ENCODE measurements at regions of chr10 and their contacts with region 1.

Region 1: GRCh38 chr10:95290461-95291364 is at the start of gene PDLIM1:
- DNase-seq: no peak
- ATAC-seq: peak; percentile 55
- H3K4me3 ChIP-seq: peak within 1 kb of the TSS; percentile 97
- H3K27ac ChIP-seq: peak within 1 kb of the TSS; percentile 98
- H3K4me1 ChIP-seq: peaks cover 47% of the 10 kb centered on the region
- H3K27me3 ChIP-seq: no peaks in the 10 kb centered on the region
- CTCF ChIP-seq: peak; percentile 21 to 30 (median 27); a peak in 5 of 6 replicates
- EP300 ChIP-seq: no peak
- POLR2A ChIP-seq: peak; percentile 96
- RAD21 ChIP-seq: no peak
- polyA plus RNA-seq, gene PDLIM1: 133 to 338 TPM

Region 2: GRCh38 chr10:95236068-95236903 is 54.4 kb before region 1 on chr10:
- CTCF ChIA-PET with region 1: interaction called, 4 read pairs
- POLR2A ChIA-PET with region 1: interaction called, 4 read pairs
- RAD21 ChIA-PET with region 1: interaction called, 5 read pairs
- SMC1A ChIA-PET with region 1: interaction called, 18 read pairs
- in situ Hi-C with region 1: no loop called
- intact Hi-C with region 1: no loop called
- DNase-seq: peak; percentile 90
- ATAC-seq: peak; percentile 96
- H3K4me3 ChIP-seq: no peak overlapping the region; the same call in 1 of the 2 replicates
- H3K27ac ChIP-seq: peak overlapping the region; percentile 78
- H3K4me1 ChIP-seq: peaks cover 21% of the 10 kb centered on the region
- H3K27me3 ChIP-seq: no peaks in the 10 kb centered on the region
- CTCF ChIP-seq: no peak
- EP300 ChIP-seq: peak; percentile 93
- POLR2A ChIP-seq: peak; percentile 39; the same call in 1 of the 2 replicates
- RAD21 ChIP-seq: no peak

Region 3: GRCh38 chr10:95266674-95267095 is 24.0 kb before region 1 on chr10:
- CTCF ChIA-PET with region 1: interaction called, 9 read pairs
- POLR2A ChIA-PET with region 1: interaction called, 7 read pairs
- RAD21 ChIA-PET with region 1: interaction called, 3 read pairs
- SMC1A ChIA-PET with region 1: interaction called, 13 read pairs
- in situ Hi-C with region 1: no loop called
- intact Hi-C with region 1: no loop called
- DNase-seq: no peak
- ATAC-seq: peak; percentile 93
- H3K4me3 ChIP-seq: no peak overlapping the region
- H3K27ac ChIP-seq: no peak overlapping the region
- H3K4me1 ChIP-seq: peaks cover 4% of the 10 kb centered on the region; the same call in 1 of the 2 replicates
- H3K27me3 ChIP-seq: no peaks in the 10 kb centered on the region
- CTCF ChIP-seq: no peak
- EP300 ChIP-seq: peak in 1 of 2 experiments; percentile 45; a peak in 1 of 4 replicates
- POLR2A ChIP-seq: no peak
- RAD21 ChIP-seq: no peak

Region 4: GRCh38 chr10:95308389-95309302 is 17.9 kb after region 1 on chr10:
- CTCF ChIA-PET with region 1: interaction called, 5 read pairs
- POLR2A ChIA-PET with region 1: interaction called, 17 read pairs
- RAD21 ChIA-PET with region 1: interaction called, 13 read pairs
- SMC1A ChIA-PET with region 1: interaction called, 40 read pairs
- in situ Hi-C with region 1: no loop called
- intact Hi-C with region 1: no loop called
- DNase-seq: no peak
- ATAC-seq: peak; percentile 66
- H3K4me3 ChIP-seq: no peak overlapping the region
- H3K27ac ChIP-seq: peak overlapping the region; percentile 57; the same call in 1 of the 2 replicates
- H3K4me1 ChIP-seq: peaks cover 25% of the 10 kb centered on the region
- H3K27me3 ChIP-seq: no peaks in the 10 kb centered on the region
- CTCF ChIP-seq: no peak
- EP300 ChIP-seq: no peak
- POLR2A ChIP-seq: no peak
- RAD21 ChIP-seq: no peak

Region 5: GRCh38 chr10:95394161-95394880 is 103.6 kb after region 1 on chr10:
- CTCF ChIA-PET with region 1: no interaction called
- POLR2A ChIA-PET with region 1: no interaction called
- RAD21 ChIA-PET with region 1: no interaction called
- SMC1A ChIA-PET with region 1: no interaction called
- in situ Hi-C with region 1: no loop called
- intact Hi-C with region 1: no loop called
- DNase-seq: peak; percentile 55
- ATAC-seq: peak; percentile 74
- H3K4me3 ChIP-seq: no peak overlapping the region
- H3K27ac ChIP-seq: peak overlapping the region; percentile 72
- H3K4me1 ChIP-seq: peaks cover 50% of the 10 kb centered on the region
- H3K27me3 ChIP-seq: no peaks in the 10 kb centered on the region
- CTCF ChIP-seq: no peak
- EP300 ChIP-seq: peak; percentile 29 to 77; a peak in 1 of 4 replicates
- POLR2A ChIP-seq: no peak
- RAD21 ChIP-seq: no peak

Region 6: DNA sequence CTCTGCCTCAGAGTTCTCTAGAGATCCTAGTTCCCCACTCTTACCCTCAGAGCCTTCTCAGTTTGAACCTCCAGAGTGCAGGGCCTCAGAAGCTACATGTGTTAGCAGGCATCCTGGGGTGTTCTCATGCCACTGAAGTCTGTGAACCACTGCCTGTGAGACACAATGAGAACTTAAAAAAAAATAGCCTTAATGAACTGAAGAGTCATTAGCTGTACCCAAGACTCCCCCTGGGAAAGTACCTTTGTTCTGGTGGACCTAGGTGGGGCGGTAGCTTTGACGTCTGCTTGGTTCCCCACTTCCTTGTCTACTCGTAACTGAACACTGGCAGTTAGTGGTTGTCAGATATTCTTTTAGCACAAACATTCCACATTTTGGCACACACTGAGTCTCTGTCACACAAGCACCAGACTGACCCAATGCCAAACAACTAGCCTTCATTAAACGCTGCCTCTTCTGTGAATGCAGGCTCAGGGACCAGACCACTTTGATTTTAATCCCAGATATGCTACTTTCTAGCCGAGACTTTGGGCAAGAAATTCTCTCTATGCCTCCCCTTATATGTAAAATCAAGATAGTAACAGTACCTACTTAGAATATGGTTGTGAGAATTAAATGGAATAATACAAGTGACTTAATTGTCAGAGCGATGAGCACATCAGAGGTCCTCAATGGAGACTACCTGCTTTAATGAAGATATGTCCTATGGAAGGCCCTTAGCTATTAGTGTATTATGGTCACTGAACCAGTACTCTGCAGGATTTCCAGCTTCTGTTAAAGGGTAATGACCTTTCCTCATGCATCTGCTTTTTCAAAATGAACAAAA is 541.7 kb after region 1 on chr10:
- CTCF ChIA-PET with region 1: no interaction called
- POLR2A ChIA-PET with region 1: no interaction called
- RAD21 ChIA-PET with region 1: no interaction called
- SMC1A ChIA-PET with region 1: interaction called, 7 read pairs
- in situ Hi-C with region 1: no loop called
- intact Hi-C with region 1: loop called (anchors 5 kb)
- DNase-seq: peak; percentile 99
- ATAC-seq: peak; percentile 87
- H3K4me3 ChIP-seq: no peak overlapping the region
- H3K27ac ChIP-seq: peak overlapping the region; percentile 98
- H3K4me1 ChIP-seq: peaks cover 71% of the 10 kb centered on the region
- H3K27me3 ChIP-seq: no peaks in the 10 kb centered on the region
- CTCF ChIP-seq: no peak
- EP300 ChIP-seq: peak; percentile 99 to 100
- POLR2A ChIP-seq: peak; percentile 37
- RAD21 ChIP-seq: peak; percentile 36; the same call in 1 of the 2 replicates

Measured in GM12878 (cell line).